MCF 10A (cell line): ENCODE measurements at regions of chr11 and their contacts with region 1.

Region 1: DNA sequence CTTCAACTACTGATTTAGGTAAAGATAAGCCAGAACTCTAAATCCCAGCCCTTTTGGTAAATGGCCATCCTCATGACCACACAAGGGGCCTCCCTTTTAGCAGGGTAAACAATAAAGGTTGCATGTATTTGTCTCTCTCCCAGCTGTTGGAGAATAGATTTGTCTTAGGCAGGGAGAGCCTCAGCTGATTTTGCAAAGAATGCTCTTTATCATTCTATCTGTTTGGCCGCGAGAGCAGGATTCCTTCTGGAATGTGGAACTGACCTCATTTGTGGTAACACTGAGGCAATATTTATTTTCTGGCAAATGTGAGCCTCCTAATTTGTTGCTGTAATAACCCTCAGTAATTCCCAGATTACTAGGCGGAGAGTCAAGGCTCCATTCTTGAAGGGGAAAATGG is 15.3 kb downstream of the PTS start:
- DNase-seq: no peak
- H3K4me3 Mint-ChIP-seq: no peak overlapping the region
- H3K27ac Mint-ChIP-seq: no peak overlapping the region
- H3K4me1 Mint-ChIP-seq: no peaks in the 10 kb centered on the region
- H3K27me3 Mint-ChIP-seq: no peaks in the 10 kb centered on the region
- CTCF ChIP-seq: no peak

Region 2: DNA sequence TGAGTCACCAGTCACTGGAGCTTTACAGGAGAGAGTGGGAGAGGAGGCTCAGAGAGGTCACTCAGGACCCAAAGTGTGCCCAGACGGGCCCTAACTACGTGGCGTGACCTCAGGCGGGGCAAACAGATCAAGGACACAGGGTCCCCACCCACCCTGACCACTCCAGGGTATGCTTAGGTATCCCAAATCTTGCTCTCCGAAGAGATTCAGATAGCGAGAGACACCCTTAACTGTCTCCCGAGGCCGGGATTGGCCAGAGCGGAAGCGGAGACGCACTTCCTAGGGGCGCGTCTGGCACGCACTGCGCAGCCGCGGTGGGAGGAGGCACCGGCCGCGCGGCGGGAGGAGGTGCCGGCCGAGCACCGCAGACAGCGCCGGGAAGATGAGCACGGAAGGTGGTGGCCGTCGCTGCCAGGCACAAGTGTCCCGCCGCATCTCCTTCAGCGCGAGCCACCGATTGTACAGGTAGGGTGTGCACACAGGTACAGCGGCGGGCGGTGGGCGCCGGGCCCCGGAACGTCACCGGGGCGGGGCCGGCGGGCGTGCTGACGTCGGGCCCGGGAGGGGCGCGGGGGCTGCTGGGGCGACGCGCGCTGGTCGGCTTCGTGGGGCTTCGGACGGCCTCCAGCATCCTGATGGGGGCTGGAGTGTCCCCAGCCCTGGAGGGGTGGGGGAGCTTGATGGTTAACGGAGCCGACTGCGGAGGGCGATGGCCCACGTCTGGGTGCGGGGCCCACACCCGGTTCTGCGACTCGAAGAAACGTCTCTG is 15.2 kb before region 1 on chr11 and contains the start of gene PTS:
- CTCF ChIA-PET with region 1: interaction called, 4 read pairs
- POLR2A ChIA-PET with region 1: interaction called, 12 read pairs
- intact Hi-C with region 1: no loop called
- DNase-seq: peak; percentile 90
- H3K4me3 Mint-ChIP-seq: peak within 1 kb of the TSS; percentile 88
- H3K27ac Mint-ChIP-seq: peak within 1 kb of the TSS; percentile 96
- H3K4me1 Mint-ChIP-seq: peaks cover 19% of the 10 kb centered on the region
- H3K27me3 Mint-ChIP-seq: no peaks in the 10 kb centered on the region
- CTCF ChIP-seq: no peak
- total RNA-seq, gene PTS: 68.3 and 79.4 TPM in 2 replicates